ENCODE measurements at regions of chr6 and their contacts with region 1.

Region 1: DNA sequence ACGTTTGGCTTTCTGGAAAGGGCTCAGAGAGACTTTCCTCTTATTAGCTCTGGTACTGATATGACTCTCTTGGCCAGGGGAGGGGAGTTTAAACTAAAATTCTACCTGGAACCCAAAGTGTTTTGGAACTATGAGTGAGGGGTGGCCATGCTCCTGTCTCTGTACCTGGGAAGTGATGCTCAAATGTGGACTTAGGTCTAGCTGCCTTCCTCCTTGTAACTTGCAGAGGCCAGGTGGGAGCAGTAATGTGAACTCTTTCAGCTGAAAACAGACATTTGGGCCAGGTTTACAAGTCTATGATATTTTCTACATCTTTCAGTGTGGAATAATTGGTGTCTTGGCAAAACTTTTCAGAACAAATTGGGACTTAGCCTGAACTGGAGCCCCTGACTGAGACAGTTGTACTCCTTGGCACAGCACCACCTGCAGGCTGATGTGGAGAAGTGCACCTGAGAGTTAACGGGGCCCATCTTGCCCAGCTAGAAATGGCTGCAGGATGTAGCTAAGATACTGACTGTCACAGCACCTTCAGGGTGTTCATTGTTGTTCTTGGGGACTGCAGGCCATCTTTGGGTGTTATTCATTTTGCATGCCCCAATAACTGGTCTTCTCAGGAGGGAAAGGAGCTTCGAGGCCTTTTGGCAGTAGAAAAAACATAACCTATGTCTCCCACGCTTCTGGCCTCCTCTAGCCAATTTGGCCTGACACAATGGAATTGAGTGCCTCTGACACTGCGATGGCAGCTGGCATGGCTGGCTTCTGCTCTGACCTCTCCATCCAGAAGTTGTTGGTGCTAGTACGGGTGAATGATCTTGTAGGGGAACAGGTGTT is 37.1 kb downstream of the CD109 start:
- DNase-seq: peak; percentile 48 to 84 (median 52)
- ATAC-seq: peak; percentile 100
- H3K4me3 ChIP-seq: no peak overlapping the region
- H3K4me3 Mint-ChIP-seq: no peak overlapping the region
- H3K27ac ChIP-seq: no peak overlapping the region
- H3K27ac Mint-ChIP-seq: no peak overlapping the region
- H3K4me1 ChIP-seq: no peaks in the 10 kb centered on the region
- H3K4me1 Mint-ChIP-seq: no peaks in the 10 kb centered on the region
- H3K27me3 ChIP-seq: no peaks in the 10 kb centered on the region
- H3K27me3 Mint-ChIP-seq: no peaks in the 10 kb centered on the region
- CTCF ChIP-seq: peak; percentile 81

Region 2: DNA sequence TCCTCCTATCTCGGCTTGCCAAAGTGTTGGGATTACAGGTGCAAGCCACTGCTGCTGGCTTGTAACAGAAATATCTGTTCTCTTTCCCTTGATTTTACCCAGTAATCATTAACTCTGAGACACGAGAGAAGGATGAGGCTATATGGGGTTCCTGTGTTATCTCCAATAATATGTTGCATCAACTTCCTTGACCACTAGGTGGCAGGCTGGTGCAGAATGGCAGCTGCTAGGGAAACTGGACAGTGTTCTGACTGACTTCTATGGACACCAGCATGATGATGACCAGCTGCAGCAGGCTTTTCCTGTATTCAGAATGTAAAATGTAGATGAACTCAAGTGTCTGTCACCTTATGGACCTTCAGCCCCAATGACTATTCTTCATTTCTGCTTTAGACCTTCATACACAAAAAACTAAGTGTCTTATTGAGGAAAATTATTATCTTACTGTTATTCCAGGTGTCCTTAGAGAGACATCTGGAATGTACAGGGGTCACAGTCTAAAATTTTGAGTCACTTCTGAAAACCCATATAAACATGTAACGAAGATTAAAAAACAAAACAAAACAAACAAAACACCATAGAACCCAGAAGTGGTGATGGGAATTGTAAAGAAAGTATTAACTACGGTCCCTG is 57.5 kb before region 1 on chr6:
- CTCF ChIA-PET with region 1: interaction called, 12 read pairs
- POLR2A ChIA-PET with region 1: no interaction called
- intact Hi-C with region 1: loop called (anchors 1 to 2 kb)
- DNase-seq: peak; percentile 33 to 80 (median 56)
- ATAC-seq: peak; percentile 75
- H3K4me3 ChIP-seq: no peak overlapping the region
- H3K4me3 Mint-ChIP-seq: no peak overlapping the region
- H3K27ac ChIP-seq: no peak overlapping the region
- H3K27ac Mint-ChIP-seq: no peak overlapping the region
- H3K4me1 ChIP-seq: no peaks in the 10 kb centered on the region
- H3K4me1 Mint-ChIP-seq: peaks cover 4% of the 10 kb centered on the region
- H3K27me3 ChIP-seq: peaks cover 0 to 2% of the 10 kb centered on the region in 2 experiments
- H3K27me3 Mint-ChIP-seq: peaks cover 19% of the 10 kb centered on the region
- CTCF ChIP-seq: peak; percentile 91

Region 3: DNA sequence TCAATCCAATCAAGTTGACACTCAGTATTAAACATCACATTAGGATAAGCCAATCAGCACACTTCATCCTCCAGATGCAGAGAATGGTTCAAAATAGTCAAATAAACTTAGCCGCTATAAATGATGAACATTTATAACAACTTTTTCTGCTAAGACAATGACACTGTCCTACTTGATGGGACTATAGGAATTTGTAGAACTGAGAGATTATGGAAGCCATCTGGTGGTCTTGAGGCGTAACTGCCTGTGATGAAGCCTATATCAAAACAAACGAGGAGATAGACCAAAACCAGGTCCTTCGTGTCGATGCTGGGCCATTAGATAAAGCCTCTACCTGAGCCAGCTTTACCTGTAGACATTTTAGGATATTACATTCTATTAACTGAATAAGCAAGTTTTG is 841.7 kb after region 1 on chr6:
- CTCF ChIA-PET with region 1: no interaction called
- POLR2A ChIA-PET with region 1: no interaction called
- intact Hi-C with region 1: loop called in 1 of 2 experiments (anchors 10 kb)
- DNase-seq: peak in 1 of 14 experiments; percentile 1
- ATAC-seq: no peak
- H3K4me3 ChIP-seq: no peak overlapping the region
- H3K4me3 Mint-ChIP-seq: no peak overlapping the region
- H3K27ac ChIP-seq: no peak overlapping the region
- H3K27ac Mint-ChIP-seq: no peak overlapping the region
- H3K4me1 ChIP-seq: no peaks in the 10 kb centered on the region
- H3K4me1 Mint-ChIP-seq: no peaks in the 10 kb centered on the region
- H3K27me3 ChIP-seq: no peaks in the 10 kb centered on the region
- H3K27me3 Mint-ChIP-seq: no peaks in the 10 kb centered on the region
- CTCF ChIP-seq: no peak